Naive thymus-derived CD4-positive, alpha-beta T cell (primary cell): ENCODE measurements at regions of chr5 and their contacts with region 1.

Region 1: GRCh38 chr5:144710637-144711036 is 540.0 kb downstream of the KCTD16 start:
- DNase-seq: no peak
- ATAC-seq: no peak
- H3K4me3 ChIP-seq: no peak overlapping the region
- H3K4me3 Mint-ChIP-seq: no peak overlapping the region
- H3K27ac ChIP-seq: no peak overlapping the region
- H3K27ac Mint-ChIP-seq: no peak overlapping the region
- H3K4me1 ChIP-seq: no peaks in the 10 kb centered on the region
- H3K4me1 Mint-ChIP-seq: no peaks in the 10 kb centered on the region
- H3K27me3 ChIP-seq: no peaks in the 10 kb centered on the region
- H3K27me3 Mint-ChIP-seq: no peaks in the 10 kb centered on the region

Region 2: DNA sequence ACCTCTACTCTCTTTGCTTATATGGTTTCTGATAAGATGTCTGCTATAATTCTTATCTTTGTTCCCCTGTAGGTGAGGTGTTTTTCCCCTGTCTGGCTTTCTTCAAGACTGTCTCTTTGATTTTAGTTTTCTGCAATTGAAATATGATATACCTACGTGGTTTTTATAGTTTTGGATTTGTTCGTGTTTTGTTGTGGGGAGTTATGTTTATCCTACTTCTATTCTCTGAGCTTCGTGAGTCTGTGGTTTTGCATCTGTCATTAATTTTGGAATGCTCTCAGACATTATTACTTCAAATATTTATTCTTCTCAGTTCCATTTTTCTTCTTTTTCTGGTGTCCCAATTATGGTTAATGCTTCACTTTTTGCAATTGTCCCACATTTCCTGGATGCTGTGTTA is 18.7 kb before region 1 on chr5:
- CTCF ChIA-PET with region 1: no interaction called
- POLR2A ChIA-PET with region 1: no interaction called
- intact Hi-C with region 1: loop called in 1 of 2 experiments (anchors 1 kb)
- DNase-seq: no peak
- ATAC-seq: no peak
- H3K4me3 ChIP-seq: no peak overlapping the region
- H3K4me3 Mint-ChIP-seq: no peak overlapping the region
- H3K27ac ChIP-seq: no peak overlapping the region
- H3K27ac Mint-ChIP-seq: no peak overlapping the region
- H3K4me1 ChIP-seq: no peaks in the 10 kb centered on the region
- H3K4me1 Mint-ChIP-seq: no peaks in the 10 kb centered on the region
- H3K27me3 ChIP-seq: no peaks in the 10 kb centered on the region
- H3K27me3 Mint-ChIP-seq: no peaks in the 10 kb centered on the region